ENCODE measurements at regions of chr10 and their contacts with region 1.

Region 1: DNA sequence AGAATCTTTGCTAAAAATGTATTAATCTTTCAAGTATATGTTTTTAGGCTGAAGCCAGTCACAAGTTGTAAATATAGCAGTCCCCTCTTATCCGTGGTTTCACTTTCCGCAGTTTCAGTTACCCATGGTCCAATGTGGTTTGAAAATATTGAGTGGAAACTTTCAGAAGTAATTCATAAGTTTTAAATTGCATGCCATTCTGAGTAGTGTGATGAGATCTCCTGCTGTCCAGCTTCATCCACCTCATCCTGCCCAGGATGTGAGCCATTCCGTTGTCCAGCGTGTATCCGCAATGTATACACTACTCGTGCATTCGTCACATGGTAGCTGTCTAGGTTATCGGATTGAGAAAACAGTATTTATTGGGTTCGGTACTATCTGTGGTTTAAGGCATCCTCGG is 12.2 kb downstream of the PDCD4 start:
- DNase-seq: no peak
- H3K4me3 ChIP-seq: no peak overlapping the region
- H3K27ac ChIP-seq: no peak overlapping the region
- H3K4me1 ChIP-seq: no peaks in the 10 kb centered on the region
- H3K27me3 ChIP-seq: no peaks in the 10 kb centered on the region
- CTCF ChIP-seq: no peak

Region 2: DNA sequence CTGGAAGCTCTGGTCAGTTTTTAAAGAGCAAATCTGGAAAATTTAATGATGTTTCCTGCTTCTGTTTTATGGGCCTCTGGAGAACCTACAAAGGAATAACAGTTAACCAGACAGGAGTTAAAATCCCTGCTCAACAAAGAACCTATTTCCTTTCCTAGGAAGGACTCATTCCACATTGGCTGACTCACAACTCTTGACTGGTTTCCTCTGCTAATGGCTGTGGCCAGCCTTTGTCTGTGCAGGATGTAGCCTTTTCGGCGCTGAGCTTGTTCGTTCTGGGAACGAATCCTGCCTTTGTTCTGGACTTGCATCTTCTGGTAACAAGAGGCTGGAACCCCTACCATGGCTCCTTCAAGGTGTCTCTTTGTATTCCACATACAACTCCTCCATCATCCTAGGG is 125.0 kb before region 1 on chr10:
- CTCF ChIA-PET with region 1: no interaction called
- dilution Hi-C with region 1: no loop called
- in situ Hi-C with region 1: loop called (anchors 10 kb)
- intact Hi-C with region 1: no loop called
- DNase-seq: peak; percentile 57
- H3K4me3 ChIP-seq: no peak overlapping the region
- H3K27ac ChIP-seq: no peak overlapping the region
- H3K4me1 ChIP-seq: peaks cover 13% of the 10 kb centered on the region
- H3K27me3 ChIP-seq: no peaks in the 10 kb centered on the region
- CTCF ChIP-seq: no peak

Region 3: GRCh38 chr10:111072232-111072631 is 188.3 kb after region 1 on chr10:
- CTCF ChIA-PET with region 1: no interaction called
- dilution Hi-C with region 1: no loop called
- in situ Hi-C with region 1: no loop called
- intact Hi-C with region 1: no loop called
- DNase-seq: no peak
- H3K4me3 ChIP-seq: no peak overlapping the region
- H3K27ac ChIP-seq: no peak overlapping the region
- H3K4me1 ChIP-seq: peaks cover 15% of the 10 kb centered on the region
- H3K27me3 ChIP-seq: peaks cover 13% of the 10 kb centered on the region
- CTCF ChIP-seq: no peak